HEK293 (cell line): ENCODE measurements at regions of chr20 and their contacts with region 1.

Region 1: DNA sequence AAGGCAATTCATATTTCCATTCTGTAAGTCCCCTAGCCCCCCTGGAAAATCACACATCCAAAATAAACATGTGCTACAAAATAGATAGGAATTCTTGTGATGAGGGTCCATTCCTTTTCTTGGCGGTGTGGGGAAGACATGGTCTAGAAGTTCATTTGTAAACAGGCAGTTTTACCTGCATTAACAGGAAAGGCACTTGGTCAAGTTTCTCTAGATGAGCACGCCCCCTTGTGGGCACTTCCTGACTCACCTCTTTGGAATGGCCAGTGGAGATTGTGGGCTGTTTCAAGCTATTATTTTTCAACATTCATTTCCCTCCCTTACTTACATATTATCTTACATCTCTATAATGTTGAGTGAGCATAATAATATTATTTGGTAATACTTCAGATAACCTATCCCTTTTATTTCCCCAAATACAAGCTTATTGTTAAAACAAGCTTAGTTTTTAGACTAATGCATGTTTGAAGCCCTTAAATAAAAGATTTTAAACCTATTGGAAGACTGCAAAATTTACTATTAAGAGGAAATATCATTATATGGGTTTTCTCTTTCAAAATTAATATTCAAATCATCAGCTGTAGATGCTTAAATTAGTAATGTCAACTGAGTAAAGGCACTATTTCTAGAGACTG is 92.1 kb downstream of the TASP1 start:
- H3K4me3 ChIP-seq: no peak overlapping the region
- H3K27ac ChIP-seq: no peak overlapping the region
- H3K4me1 ChIP-seq: no peaks in the 10 kb centered on the region
- CTCF ChIP-seq: 0 out of 2 replicates have a peak, but pooled peaks have one; percentile 31

Region 2: GRCh38 chr20:13119583-13119982 is 427.0 kb before region 1 on chr20:
- CTCF ChIA-PET with region 1: interaction called, 69 read pairs
- POLR2A ChIA-PET with region 1: no interaction called
- H3K4me3 ChIP-seq: no peak overlapping the region
- H3K27ac ChIP-seq: no peak overlapping the region
- H3K4me1 ChIP-seq: no peaks in the 10 kb centered on the region
- CTCF ChIP-seq: peak; percentile 68

Region 3: GRCh38 chr20:13220194-13220903 is 326.3 kb before region 1 on chr20:
- CTCF ChIA-PET with region 1: no interaction called
- POLR2A ChIA-PET with region 1: no interaction called
- H3K4me3 ChIP-seq: peak overlapping the region; percentile 53
- H3K27ac ChIP-seq: no peak overlapping the region; the same call in 1 of the 2 replicates
- H3K4me1 ChIP-seq: 0 out of 2 replicates have a peak, but pooled peaks cover 2% of the 10 kb centered on the region
- CTCF ChIP-seq: 0 out of 2 replicates have a peak, but pooled peaks have one; percentile 27

Region 4: GRCh38 chr20:13458860-13459451 is 87.7 kb before region 1 on chr20:
- CTCF ChIA-PET with region 1: interaction called, 26 read pairs
- POLR2A ChIA-PET with region 1: no interaction called
- H3K4me3 ChIP-seq: no peak overlapping the region
- H3K27ac ChIP-seq: no peak overlapping the region
- H3K4me1 ChIP-seq: no peaks in the 10 kb centered on the region
- CTCF ChIP-seq: no peak

Region 5: DNA sequence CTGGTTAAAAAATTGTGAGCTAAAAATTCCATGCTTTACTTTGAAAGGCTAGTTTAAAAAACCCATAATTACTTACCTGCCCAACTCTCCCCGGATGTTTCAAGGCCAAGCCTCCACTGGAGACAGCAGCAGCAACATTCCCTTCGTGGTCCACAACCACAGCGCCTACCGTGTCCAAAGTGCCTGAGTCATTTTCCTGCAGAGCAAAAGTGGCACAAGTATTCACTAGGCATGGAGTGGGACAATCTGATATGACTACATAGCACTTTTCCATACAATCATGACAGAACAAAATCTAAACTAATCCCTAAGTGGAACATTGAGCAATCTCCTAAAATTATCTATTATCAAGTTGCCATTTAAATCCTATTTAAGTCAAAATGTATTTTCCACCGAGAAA is 12.7 kb before region 1 on chr20:
- CTCF ChIA-PET with region 1: interaction called, 40 read pairs
- POLR2A ChIA-PET with region 1: no interaction called
- H3K4me3 ChIP-seq: no peak overlapping the region
- H3K27ac ChIP-seq: no peak overlapping the region
- H3K4me1 ChIP-seq: no peaks in the 10 kb centered on the region
- CTCF ChIP-seq: no peak

Region 6: DNA sequence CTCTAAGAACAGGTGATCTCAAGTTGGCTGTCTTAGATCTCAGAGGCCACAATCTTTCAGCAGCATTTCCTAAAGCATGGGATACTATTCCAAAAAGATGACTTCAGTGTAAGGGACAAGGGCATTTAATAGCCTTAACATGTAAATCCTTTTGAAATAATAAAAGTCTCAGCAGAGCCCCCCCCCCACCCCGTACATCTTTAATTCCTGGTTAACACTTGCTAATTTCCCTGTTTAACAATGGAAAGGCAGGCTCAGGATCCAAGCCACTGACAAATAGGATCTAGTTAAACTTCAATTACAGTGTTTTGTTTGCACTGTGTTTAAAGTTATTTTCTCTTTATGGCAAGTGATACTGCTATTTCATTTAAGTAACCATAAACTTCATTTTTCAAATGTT is 80.1 kb after region 1 on chr20:
- CTCF ChIA-PET with region 1: no interaction called
- POLR2A ChIA-PET with region 1: no interaction called
- H3K4me3 ChIP-seq: no peak overlapping the region
- H3K27ac ChIP-seq: no peak overlapping the region
- H3K4me1 ChIP-seq: peaks cover 3% of the 10 kb centered on the region; the same call in 1 of the 2 replicates
- CTCF ChIP-seq: no peak

Region 7: GRCh38 chr20:13681248-13682125 is 134.9 kb after region 1 on chr20:
- CTCF ChIA-PET with region 1: no interaction called
- POLR2A ChIA-PET with region 1: no interaction called
- H3K4me3 ChIP-seq: no peak overlapping the region
- H3K27ac ChIP-seq: no peak overlapping the region
- H3K4me1 ChIP-seq: 0 out of 2 replicates have a peak, but pooled peaks cover 4% of the 10 kb centered on the region
- CTCF ChIP-seq: no peak